A673 (cell line): ENCODE measurements at regions of chr15 and their contacts with region 1.

Region 1: GRCh38 chr15:91116113-91117067 is 16.3 kb downstream of the SV2B start:
- DNase-seq: no peak
- H3K4me3 ChIP-seq: no peak overlapping the region
- H3K27ac ChIP-seq: no peak overlapping the region
- H3K4me1 ChIP-seq: no peaks in the 10 kb centered on the region
- H3K27me3 ChIP-seq: peaks cover 11% of the 10 kb centered on the region
- CTCF ChIP-seq: no peak

Region 2: GRCh38 chr15:90862964-90863778 is 253.2 kb before region 1 on chr15:
- CTCF ChIA-PET with region 1: no interaction called
- POLR2A ChIA-PET with region 1: no interaction called
- intact Hi-C with region 1: no loop called
- DNase-seq: no peak
- H3K4me3 ChIP-seq: no peak overlapping the region
- H3K27ac ChIP-seq: no peak overlapping the region
- H3K4me1 ChIP-seq: peaks cover 2% of the 10 kb centered on the region
- H3K27me3 ChIP-seq: no peaks in the 10 kb centered on the region
- CTCF ChIP-seq: no peak

Region 3: GRCh38 chr15:91135201-91136130 is 19.1 kb after region 1 on chr15:
- CTCF ChIA-PET with region 1: no interaction called
- POLR2A ChIA-PET with region 1: no interaction called
- intact Hi-C with region 1: loop called (anchors 2 kb)
- DNase-seq: no peak
- H3K4me3 ChIP-seq: no peak overlapping the region
- H3K27ac ChIP-seq: no peak overlapping the region
- H3K4me1 ChIP-seq: no peaks in the 10 kb centered on the region
- H3K27me3 ChIP-seq: peaks cover 4% of the 10 kb centered on the region
- CTCF ChIP-seq: no peak

Region 4: DNA sequence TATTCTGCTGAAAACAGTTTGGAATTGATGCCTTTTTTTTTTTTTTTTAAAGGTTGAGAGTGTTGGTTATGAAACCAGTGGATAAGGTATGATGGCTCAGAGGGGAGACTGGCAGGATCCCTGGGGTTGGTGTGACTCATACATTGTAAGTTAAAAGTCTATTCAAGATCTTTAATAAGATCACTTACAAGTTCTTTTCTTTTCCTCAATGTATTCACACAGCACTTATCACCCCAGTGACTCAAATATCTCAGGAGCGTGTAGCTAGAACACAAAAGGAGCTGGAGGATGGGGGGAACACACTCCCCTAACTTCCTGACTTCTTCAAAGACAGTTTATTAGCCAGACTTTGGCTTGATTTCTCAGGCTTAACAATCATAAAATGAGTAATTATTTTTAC is 268.9 kb after region 1 on chr15:
- CTCF ChIA-PET with region 1: no interaction called
- POLR2A ChIA-PET with region 1: no interaction called
- intact Hi-C with region 1: no loop called
- DNase-seq: peak; percentile 80
- H3K4me3 ChIP-seq: no peak overlapping the region
- H3K27ac ChIP-seq: no peak overlapping the region
- H3K4me1 ChIP-seq: peaks cover 6% of the 10 kb centered on the region
- H3K27me3 ChIP-seq: peaks cover 22% of the 10 kb centered on the region
- CTCF ChIP-seq: no peak